OCI-LY7 (cell line): ENCODE measurements at regions of chr5 and their contacts with region 1.

Region 1: GRCh38 chr5:15406478-15406877 is 93.5 kb upstream of the FBXL7 start:
- DNase-seq: no peak
- H3K4me3 ChIP-seq: no peak overlapping the region
- H3K27ac ChIP-seq: no peak overlapping the region
- H3K4me1 ChIP-seq: no peaks in the 10 kb centered on the region
- CTCF ChIP-seq: no peak

Region 2: GRCh38 chr5:15260356-15261268 is 145.9 kb before region 1 on chr5:
- CTCF ChIA-PET with region 1: no interaction called
- POLR2A ChIA-PET with region 1: interaction called, 10 read pairs
- intact Hi-C with region 1: no loop called
- DNase-seq: no peak
- H3K4me3 ChIP-seq: no peak overlapping the region
- H3K27ac ChIP-seq: no peak overlapping the region
- H3K4me1 ChIP-seq: no peaks in the 10 kb centered on the region
- CTCF ChIP-seq: no peak

Region 3: GRCh38 chr5:15283076-15283475 is 123.4 kb before region 1 on chr5:
- CTCF ChIA-PET with region 1: no interaction called
- POLR2A ChIA-PET with region 1: no interaction called
- intact Hi-C with region 1: no loop called
- DNase-seq: no peak
- H3K4me3 ChIP-seq: no peak overlapping the region
- H3K27ac ChIP-seq: no peak overlapping the region
- H3K4me1 ChIP-seq: no peaks in the 10 kb centered on the region
- CTCF ChIP-seq: no peak

Region 4: DNA sequence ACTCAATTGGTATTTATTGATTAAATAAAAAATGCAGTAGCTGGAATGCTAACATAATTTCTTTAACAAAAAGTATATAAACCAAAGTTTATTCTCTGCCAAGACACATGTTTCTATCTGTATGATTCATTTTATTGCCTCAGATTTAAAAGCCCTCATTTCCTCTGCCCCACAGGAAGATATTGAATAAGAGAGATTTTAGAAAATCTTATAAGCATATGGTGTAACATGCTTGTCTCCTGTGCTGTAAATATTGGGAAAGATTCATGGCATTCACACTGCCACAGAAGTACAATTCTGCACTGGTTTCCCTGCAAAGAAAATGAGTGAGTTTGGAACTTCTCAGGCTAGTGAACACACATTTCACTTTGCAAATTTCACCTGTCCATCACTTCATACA is 41.4 kb before region 1 on chr5:
- CTCF ChIA-PET with region 1: no interaction called
- POLR2A ChIA-PET with region 1: no interaction called
- intact Hi-C with region 1: no loop called
- DNase-seq: no peak
- H3K4me3 ChIP-seq: no peak overlapping the region
- H3K27ac ChIP-seq: no peak overlapping the region
- H3K4me1 ChIP-seq: no peaks in the 10 kb centered on the region
- CTCF ChIP-seq: no peak

Region 5: DNA sequence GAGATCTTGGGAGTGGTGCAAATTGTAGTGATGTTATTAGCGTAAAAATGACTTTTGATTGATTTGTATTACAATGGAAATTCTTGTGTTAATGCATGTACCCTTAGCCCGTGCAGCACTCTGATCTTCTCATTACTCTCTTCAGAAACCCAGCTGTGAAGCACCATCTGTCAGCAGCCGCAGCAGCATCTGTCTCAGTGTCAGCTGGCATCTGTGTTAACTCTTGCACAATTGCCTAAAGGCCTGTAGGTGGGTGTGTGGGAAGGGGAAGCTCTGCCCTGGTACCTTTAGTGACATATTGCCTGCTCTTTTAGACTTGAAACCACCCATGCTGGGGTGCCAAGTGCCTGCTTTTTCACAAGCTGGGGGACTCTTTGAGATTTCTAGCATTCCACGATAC is 194.8 kb after region 1 on chr5:
- CTCF ChIA-PET with region 1: no interaction called
- POLR2A ChIA-PET with region 1: no interaction called
- intact Hi-C with region 1: no loop called
- DNase-seq: no peak
- H3K4me3 ChIP-seq: no peak overlapping the region
- H3K27ac ChIP-seq: no peak overlapping the region
- H3K4me1 ChIP-seq: no peaks in the 10 kb centered on the region
- CTCF ChIP-seq: no peak